Activated T-helper 1 cell treated with anti-CD3 and anti-CD28 coated beads, Interleukin-12 subunit alpha, Interleukin-12 subunit beta, Interleukin-2, Interleukin-4 antibody, amounts not matched to agents 30 ng/mL and 10 ng/mL and 1 ng/mL, durations not matched to agents 14 hours and 24 hours and 36 hours (primary cell): ENCODE measurements at regions of chr2 and their contacts with region 1.

Region 1: DNA sequence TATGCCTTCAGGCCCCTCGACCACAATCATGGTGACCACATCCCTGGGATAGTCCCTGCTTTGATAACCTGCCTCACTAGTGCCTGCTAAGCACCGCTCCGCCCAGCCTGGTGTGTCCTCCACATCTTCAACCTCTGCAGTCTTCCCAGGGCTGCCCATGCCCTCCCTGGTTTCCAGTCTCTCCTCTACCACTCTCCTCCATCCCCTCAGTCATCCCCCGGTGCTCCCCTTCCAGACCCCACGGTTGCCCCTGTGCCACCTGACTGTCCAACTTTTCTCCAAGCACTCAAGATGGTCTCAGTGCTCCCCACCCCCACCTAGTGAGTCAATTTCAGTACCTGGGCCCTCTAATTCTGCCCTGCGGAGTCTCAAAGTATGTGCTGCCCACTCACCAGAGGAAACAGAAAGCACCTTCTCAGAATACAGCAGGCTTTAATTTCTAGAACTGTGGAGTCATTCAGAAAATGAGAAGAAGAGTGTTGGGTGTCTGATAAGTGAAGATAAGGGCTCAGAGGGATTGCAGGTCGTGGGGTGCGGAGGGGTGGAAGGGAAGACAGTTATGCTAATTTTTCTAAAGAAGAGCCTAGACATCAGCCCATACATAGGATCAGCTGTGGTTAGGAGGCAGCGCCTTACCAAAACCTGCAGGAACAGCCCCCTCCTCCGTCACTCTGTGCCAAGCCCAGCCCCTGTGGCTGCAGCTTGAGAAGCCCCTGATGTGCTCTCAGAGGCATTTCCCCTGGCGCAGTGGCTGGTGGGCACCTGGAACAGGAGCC is 53.6 kb upstream of the CAB39 start:
- DNase-seq: peak; percentile 70
- H3K4me3 Mint-ChIP-seq: peak overlapping the region; percentile 84
- H3K27ac Mint-ChIP-seq: peak overlapping the region; percentile 99
- H3K4me1 Mint-ChIP-seq: peaks cover 91% of the 10 kb centered on the region
- H3K27me3 Mint-ChIP-seq: no peaks in the 10 kb centered on the region

Region 2: DNA sequence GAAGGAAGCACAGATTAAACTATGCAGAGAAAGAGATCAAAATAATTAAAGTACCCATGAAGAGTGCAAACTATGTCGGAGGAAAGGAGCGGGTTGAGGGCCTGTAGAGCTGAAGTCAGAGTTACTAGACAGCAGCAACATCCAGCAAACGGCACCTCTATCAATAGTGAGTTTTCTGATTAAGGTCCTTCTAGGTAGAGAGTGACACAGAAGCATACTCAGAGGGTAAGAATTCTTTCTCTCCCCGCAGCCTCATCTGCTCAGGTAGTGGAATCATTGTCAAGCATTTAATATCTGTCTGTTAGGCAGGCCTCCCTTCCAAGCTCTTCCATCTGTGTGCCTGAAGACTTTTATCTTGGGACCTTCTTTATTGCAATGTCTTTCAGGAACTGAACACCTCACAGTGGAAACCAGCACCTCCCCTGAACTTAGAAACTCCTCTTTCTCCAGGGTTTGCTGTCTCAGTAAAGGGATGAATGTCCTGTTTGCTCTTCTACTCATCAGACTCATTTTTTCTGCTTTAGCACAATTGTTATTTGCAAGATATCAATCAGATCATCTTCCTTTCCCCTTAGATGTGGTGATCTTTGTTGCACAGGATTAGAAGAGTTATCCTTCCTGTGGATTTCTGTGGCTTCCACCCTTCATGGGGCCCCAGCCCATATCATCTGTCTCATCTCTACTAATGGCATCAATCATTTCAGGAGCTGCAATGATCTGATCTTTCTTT is 404.7 kb before region 1 on chr2:
- intact Hi-C with region 1: loop called (anchors 1 kb)
- DNase-seq: no peak
- H3K4me3 Mint-ChIP-seq: no peak overlapping the region
- H3K27ac Mint-ChIP-seq: no peak overlapping the region
- H3K4me1 Mint-ChIP-seq: peaks cover 12% of the 10 kb centered on the region
- H3K27me3 Mint-ChIP-seq: no peaks in the 10 kb centered on the region

Region 3: GRCh38 chr2:230541934-230542380 is 117.1 kb before region 1 on chr2:
- intact Hi-C with region 1: no loop called
- DNase-seq: no peak
- H3K4me3 Mint-ChIP-seq: peak overlapping the region; percentile 48
- H3K27ac Mint-ChIP-seq: peak overlapping the region; percentile 85
- H3K4me1 Mint-ChIP-seq: peaks cover 61% of the 10 kb centered on the region
- H3K27me3 Mint-ChIP-seq: no peaks in the 10 kb centered on the region

Region 4: DNA sequence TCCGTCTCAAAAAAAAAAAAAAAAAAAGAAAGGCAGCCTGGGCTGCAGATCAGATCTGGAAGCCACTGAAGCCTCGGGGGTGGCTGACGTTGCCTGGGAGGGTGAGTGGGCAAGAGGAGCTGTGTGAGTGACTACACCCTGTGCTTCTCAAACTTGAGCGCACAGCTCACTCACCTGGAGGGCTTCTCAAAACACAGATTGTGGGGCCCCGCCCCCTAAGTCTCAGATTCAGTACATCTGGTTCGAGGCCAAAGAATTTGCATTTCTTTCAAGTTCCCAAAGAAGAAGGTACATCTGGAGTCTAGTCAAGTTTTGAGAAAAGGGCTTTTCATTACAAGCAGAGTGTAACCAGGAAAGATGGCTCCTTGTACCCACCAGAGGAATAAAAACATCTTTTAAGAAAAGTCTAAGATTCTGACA is 44.1 kb before region 1 on chr2:
- intact Hi-C with region 1: loop called (anchors 1 kb)
- DNase-seq: peak; percentile 26
- H3K4me3 Mint-ChIP-seq: peak overlapping the region; percentile 26
- H3K27ac Mint-ChIP-seq: peak overlapping the region; percentile 55
- H3K4me1 Mint-ChIP-seq: peaks cover 54% of the 10 kb centered on the region
- H3K27me3 Mint-ChIP-seq: no peaks in the 10 kb centered on the region

Region 5: DNA sequence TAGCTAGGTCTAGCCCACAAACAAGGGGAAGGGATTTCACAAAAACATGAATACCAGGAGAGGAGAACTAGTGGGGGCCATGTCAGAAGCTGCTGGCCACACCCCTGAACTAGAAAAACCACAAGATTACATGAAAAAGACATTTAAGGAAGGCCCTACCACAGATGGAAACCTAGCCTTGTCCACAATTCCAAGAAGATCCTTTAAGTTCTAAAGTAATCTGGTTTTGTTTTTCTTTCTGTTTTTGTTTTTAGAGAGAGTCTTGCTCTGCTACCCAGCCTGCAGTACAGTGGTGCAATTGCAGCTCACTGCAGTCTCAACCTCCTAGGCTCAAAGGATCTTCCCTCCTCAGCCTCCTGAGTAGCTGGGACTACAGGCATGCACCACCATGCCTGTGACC is 19.4 kb after region 1 on chr2:
- intact Hi-C with region 1: loop called (anchors 1 kb)
- DNase-seq: no peak
- H3K4me3 Mint-ChIP-seq: peak overlapping the region; percentile 39
- H3K27ac Mint-ChIP-seq: peak overlapping the region; percentile 86
- H3K4me1 Mint-ChIP-seq: peaks cover 70% of the 10 kb centered on the region
- H3K27me3 Mint-ChIP-seq: no peaks in the 10 kb centered on the region

Region 6: DNA sequence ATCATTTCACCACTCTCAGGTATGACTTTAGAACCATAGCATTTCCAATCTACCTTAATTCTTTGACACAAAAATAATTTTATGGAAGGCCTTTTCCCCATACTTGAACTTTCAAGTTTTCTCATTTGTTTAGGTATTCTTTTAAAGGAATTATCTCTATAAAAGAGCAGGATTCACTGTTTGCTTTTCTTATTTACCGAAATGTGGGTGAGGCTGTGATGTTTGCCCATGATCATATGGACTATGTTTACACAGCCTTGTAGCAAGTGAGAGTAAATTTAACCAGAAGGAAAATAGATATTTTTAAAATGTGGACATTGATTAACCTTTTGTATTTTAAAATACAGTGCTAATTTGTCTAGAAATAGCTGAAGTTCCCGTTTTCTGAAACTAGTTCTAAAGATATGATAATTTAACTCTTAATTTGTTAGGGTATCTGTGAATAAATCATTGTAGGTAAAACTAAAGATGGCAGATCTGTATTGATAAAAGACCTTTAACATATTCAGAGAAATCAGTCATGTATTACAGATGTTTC is 79.9 kb after region 1 on chr2:
- intact Hi-C with region 1: no loop called
- DNase-seq: no peak
- H3K4me3 Mint-ChIP-seq: no peak overlapping the region
- H3K27ac Mint-ChIP-seq: peak overlapping the region; percentile 64
- H3K4me1 Mint-ChIP-seq: peaks cover 78% of the 10 kb centered on the region
- H3K27me3 Mint-ChIP-seq: no peaks in the 10 kb centered on the region

Region 7: DNA sequence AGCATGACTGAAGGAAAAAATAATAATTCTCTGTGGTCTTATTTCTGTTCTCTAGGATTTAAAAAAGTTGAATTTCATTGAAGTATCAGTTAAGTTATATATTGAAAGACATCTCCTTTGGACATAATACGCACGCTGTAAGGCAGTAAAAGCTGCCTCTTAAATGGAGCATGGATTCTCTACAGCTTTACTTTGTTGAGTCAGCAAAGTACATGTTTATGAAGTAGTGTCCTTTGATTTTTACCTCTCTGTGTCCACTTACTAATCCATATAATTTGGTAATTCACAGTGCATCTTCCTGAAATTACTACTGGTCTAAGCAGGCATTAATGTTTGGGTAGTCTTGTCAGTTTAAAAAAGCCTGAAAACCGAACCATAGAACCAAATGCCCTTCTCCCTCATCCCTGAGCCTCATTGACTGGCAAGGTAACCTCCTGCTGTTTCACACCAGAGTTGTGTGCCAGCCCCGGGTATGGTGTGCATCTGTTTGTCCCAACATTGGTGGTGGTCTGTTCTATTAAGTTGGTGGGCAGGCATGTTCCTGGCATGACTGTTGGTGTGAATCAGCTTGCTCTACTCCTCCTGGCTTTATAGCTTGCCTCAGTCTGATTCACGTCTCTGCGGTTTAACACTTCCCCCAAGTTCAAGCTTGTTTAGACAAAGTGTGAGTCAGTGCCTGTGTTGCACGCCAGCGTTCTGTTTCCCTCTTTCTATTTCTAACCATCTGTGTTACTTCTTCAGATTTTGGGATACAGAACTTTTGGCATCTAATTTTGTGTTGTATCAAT is 134.7 kb after region 1 on chr2:
- intact Hi-C with region 1: loop called (anchors 1 kb)
- DNase-seq: peak; percentile 73
- H3K4me3 Mint-ChIP-seq: peak overlapping the region; percentile 78
- H3K27ac Mint-ChIP-seq: peak overlapping the region; percentile 97
- H3K4me1 Mint-ChIP-seq: peaks cover 61% of the 10 kb centered on the region
- H3K27me3 Mint-ChIP-seq: peaks cover 2% of the 10 kb centered on the region